Common myeloid progenitor, CD34-positive (primary cell): ENCODE measurements at regions of chr10 and their contacts with region 1.

Region 1: GRCh38 chr10:22461891-22462290 is 116.6 kb downstream of the SPAG6 start:
- DNase-seq: no peak
- H3K4me3 ChIP-seq: no peak overlapping the region
- H3K27ac ChIP-seq: no peak overlapping the region
- H3K4me1 ChIP-seq: peaks cover 0 to 10% (median 4%) of the 10 kb centered on the region in 4 experiments
- H3K27me3 ChIP-seq: no peaks in the 10 kb centered on the region

Region 2: DNA sequence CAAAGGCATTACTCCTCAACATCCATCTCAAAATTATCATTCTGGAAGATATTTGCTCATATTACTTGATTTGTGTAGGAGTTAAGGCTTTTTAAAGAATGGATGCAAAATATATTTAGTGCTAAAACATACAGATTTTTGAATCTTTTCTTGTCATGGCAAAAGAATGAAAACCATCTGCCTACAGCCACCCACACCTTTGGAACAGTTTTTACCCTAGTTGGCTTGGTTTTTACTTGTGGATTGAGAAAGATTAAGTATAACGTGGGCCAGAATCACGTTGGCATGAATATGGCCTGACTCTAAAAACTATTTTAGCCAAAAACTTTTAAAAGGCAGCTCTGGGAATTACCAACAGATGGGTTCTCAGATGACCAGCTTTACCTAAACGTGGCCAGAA is 11.6 kb after region 1 on chr10:
- CTCF ChIA-PET with region 1: interaction called, 11 read pairs
- POLR2A ChIA-PET with region 1: no interaction called
- DNase-seq: no peak
- H3K4me3 ChIP-seq: no peak overlapping the region
- H3K27ac ChIP-seq: no peak overlapping the region
- H3K4me1 ChIP-seq: peaks cover 10 to 21% (median 17%) of the 10 kb centered on the region in 4 experiments
- H3K27me3 ChIP-seq: peaks cover 19 to 80% (median 32%) of the 10 kb centered on the region in 5 experiments

Region 3: GRCh38 chr10:22534849-22535604 is 73.1 kb after region 1 on chr10:
- CTCF ChIA-PET with region 1: no interaction called
- POLR2A ChIA-PET with region 1: no interaction called
- DNase-seq: peak in 1 of 3 donors; percentile 18
- H3K4me3 ChIP-seq: no peak overlapping the region
- H3K27ac ChIP-seq: no peak overlapping the region
- H3K4me1 ChIP-seq: no peaks in the 10 kb centered on the region
- H3K27me3 ChIP-seq: no peaks in the 10 kb centered on the region